ENCODE measurements at regions of chr6 and their contacts with region 1.

Region 1: GRCh38 chr6:36765594-36766398 is 68.2 kb downstream of the RAB44 start:
- DNase-seq: peak; percentile 76
- ATAC-seq: peak; percentile 95
- H3K4me3 ChIP-seq: no peak overlapping the region
- H3K27ac ChIP-seq: no peak overlapping the region
- H3K4me1 ChIP-seq: peaks cover 11% of the 10 kb centered on the region
- H3K27me3 ChIP-seq: peaks cover 13% of the 10 kb centered on the region
- CTCF ChIP-seq: peak; percentile 98
- POLR2A ChIP-seq: 0 out of 2 replicates have a peak, but pooled peaks have one; percentile 32
- RAD21 ChIP-seq: peak; percentile 98

Region 2: DNA sequence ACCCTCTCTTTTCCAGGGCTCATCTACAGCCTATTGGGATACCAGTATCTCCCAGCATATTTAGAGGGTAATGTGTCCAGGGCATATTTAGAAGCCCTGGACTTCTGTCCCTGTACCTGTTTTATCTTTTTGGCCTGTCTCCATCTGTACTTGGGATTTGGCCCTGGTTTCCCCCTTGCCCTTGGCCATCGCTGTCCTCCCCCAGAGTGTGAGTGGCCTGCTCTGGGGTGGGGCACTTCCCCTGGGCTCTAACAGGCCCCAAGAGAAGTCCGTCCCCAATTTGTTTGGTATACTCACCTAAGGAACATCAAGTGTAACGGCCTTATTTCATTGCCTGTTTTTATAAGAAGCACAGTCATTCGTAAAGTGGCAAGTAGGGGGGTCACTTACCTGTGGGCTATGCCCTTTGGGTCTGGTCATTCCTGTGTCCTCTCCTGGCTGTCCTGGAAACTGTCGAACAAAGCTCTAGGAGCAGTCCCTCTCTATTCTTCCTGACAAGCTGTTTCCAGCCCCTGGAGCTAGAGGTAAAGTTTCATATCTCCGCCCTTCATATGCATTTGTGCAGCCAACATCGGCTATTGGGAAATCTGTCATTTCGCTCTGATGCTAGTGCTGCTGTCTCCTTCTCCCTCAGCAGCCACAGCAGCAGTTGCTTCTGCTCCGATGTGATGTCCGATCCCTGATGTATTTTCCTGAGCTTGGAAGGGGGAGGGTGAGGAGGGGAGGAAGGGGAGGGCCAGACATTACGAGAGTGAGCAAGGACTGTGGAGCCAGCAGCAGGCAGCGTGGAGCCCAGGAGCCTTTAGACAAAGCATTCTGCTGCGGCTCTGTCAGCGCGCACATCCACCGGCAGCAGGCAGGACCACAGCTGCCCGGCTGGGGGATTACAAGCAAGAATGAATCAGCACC is 1708.1 kb before region 1 on chr6:
- CTCF ChIA-PET with region 1: no interaction called
- POLR2A ChIA-PET with region 1: no interaction called
- dilution Hi-C with region 1: no loop called
- in situ Hi-C with region 1: no loop called
- intact Hi-C with region 1: no loop called
- DNase-seq: no peak
- ATAC-seq: no peak
- H3K4me3 ChIP-seq: no peak overlapping the region
- H3K27ac ChIP-seq: no peak overlapping the region
- H3K4me1 ChIP-seq: peaks cover 9% of the 10 kb centered on the region
- H3K27me3 ChIP-seq: no peaks in the 10 kb centered on the region
- CTCF ChIP-seq: no peak
- POLR2A ChIP-seq: no peak
- RAD21 ChIP-seq: no peak

Region 3: GRCh38 chr6:36853325-36853724 is 87.5 kb after region 1 on chr6:
- CTCF ChIA-PET with region 1: interaction called, 5 read pairs
- POLR2A ChIA-PET with region 1: no interaction called
- dilution Hi-C with region 1: no loop called
- in situ Hi-C with region 1: no loop called
- intact Hi-C with region 1: loop called (anchors 2 kb)
- DNase-seq: peak; percentile 90
- ATAC-seq: peak; percentile 63
- H3K4me3 ChIP-seq: no peak overlapping the region
- H3K27ac ChIP-seq: peak overlapping the region; percentile 53
- H3K4me1 ChIP-seq: peaks cover 9% of the 10 kb centered on the region
- H3K27me3 ChIP-seq: no peaks in the 10 kb centered on the region
- CTCF ChIP-seq: no peak
- POLR2A ChIP-seq: no peak
- RAD21 ChIP-seq: no peak

Region 4: GRCh38 chr6:36885461-36886401 is 119.9 kb after region 1 on chr6 and contains the start of gene C6orf89:
- CTCF ChIA-PET with region 1: interaction called, 5 read pairs
- POLR2A ChIA-PET with region 1: no interaction called
- dilution Hi-C with region 1: no loop called
- in situ Hi-C with region 1: no loop called
- intact Hi-C with region 1: loop called (anchors 1 kb)
- DNase-seq: peak; percentile 96
- ATAC-seq: peak; percentile 100
- H3K4me3 ChIP-seq: peak within 1 kb of the TSS; percentile 80
- H3K27ac ChIP-seq: peak within 1 kb of the TSS; percentile 74
- H3K4me1 ChIP-seq: no peaks in the 10 kb centered on the region; the same call in 1 of the 2 replicates
- H3K27me3 ChIP-seq: no peaks in the 10 kb centered on the region
- CTCF ChIP-seq: peak; percentile 88
- POLR2A ChIP-seq: peak; percentile 56; the same call in 1 of the 2 replicates
- RAD21 ChIP-seq: peak; percentile 62
- total RNA-seq, gene C6orf89: 39.2 and 52.3 TPM in 2 replicates

Region 5: DNA sequence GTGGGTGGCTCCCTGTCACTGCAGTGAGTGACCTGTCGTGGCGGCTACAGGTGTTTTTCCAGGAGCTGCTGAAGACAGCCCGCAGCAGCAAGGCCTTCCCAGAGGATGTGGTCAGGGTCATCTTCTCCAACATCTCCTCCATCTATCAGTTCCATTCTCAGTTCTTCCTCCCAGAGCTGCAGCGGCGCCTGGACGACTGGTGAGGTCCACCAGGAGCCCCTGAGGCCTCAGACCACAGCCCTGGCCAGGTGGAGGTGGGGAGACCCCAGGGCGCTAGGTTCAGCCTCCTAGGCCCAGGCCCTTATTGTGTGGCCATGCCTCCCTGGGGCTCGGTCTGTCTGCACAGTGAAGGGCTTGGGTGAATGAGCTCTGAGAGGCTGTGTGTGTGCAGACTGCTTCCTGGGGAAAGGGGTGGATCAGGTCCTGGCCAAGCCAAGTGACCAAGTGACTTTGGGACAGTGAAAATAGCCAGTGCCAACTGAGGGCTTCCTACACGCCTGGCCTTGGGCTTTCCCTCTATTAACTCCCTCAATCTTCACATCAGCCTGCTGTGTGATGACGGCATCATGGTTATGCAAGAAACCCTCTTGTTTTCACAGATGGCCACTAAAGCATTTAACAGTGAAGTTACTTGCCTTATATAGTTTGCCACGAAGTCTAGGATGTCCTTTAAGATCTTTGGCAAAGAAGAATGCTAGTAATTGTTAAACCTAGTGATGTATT is 246.0 kb after region 1 on chr6:
- CTCF ChIA-PET with region 1: interaction called, 28 read pairs
- POLR2A ChIA-PET with region 1: no interaction called
- dilution Hi-C with region 1: no loop called
- in situ Hi-C with region 1: loop called (anchors 5 kb)
- intact Hi-C with region 1: no loop called
- DNase-seq: peak; percentile 79
- ATAC-seq: peak; percentile 66; the same call in 1 of the 2 replicates
- H3K4me3 ChIP-seq: no peak overlapping the region
- H3K27ac ChIP-seq: no peak overlapping the region
- H3K4me1 ChIP-seq: peaks cover 2% of the 10 kb centered on the region; the same call in 1 of the 2 replicates
- H3K27me3 ChIP-seq: 0 out of 2 replicates have a peak, but pooled peaks cover 2% of the 10 kb centered on the region
- CTCF ChIP-seq: no peak
- POLR2A ChIP-seq: no peak
- RAD21 ChIP-seq: no peak

Region 6: GRCh38 chr6:37207903-37208456 is 442.2 kb after region 1 on chr6:
- CTCF ChIA-PET with region 1: interaction called, 4 read pairs
- POLR2A ChIA-PET with region 1: no interaction called
- dilution Hi-C with region 1: no loop called
- in situ Hi-C with region 1: loop called (anchors 5 kb)
- intact Hi-C with region 1: loop called (anchors 5 kb)
- DNase-seq: peak; percentile 70
- ATAC-seq: peak; percentile 86
- H3K4me3 ChIP-seq: no peak overlapping the region
- H3K27ac ChIP-seq: no peak overlapping the region
- H3K4me1 ChIP-seq: peaks cover 2% of the 10 kb centered on the region; the same call in 1 of the 2 replicates
- H3K27me3 ChIP-seq: no peaks in the 10 kb centered on the region
- CTCF ChIP-seq: peak; percentile 69
- POLR2A ChIP-seq: no peak
- RAD21 ChIP-seq: peak; percentile 67

Region 7: DNA sequence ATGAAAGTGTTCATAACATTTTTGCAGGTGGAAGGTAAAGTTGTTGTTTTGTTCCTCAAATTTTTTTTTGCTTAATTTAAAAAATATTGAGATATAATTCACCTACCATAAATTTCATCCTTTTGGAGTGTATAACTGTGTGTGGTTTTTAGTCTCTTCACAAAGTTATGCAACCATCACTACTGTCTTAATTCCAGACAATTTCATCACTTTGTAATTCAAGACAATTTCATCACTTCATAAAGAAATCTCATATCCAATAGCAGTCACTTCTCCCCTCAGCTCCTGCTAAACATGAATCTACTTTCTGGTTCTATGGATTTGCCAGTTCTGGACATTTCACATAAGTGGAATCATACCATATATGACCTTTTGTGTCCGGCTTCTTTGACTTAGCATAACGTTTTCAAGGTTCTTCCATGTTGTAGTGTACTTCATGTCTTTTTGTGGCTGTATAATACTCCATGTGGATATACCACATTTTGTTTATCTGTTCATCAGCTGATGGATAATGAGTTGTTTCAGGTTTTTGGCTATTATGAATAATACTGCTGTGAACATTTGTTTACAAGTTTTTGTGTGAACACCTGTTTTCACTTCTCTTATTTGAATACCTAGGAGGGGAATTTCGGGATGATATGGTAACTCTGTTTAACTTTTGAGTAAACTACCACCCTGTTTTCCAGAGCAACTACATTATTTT is 1072.6 kb after region 1 on chr6:
- CTCF ChIA-PET with region 1: no interaction called
- POLR2A ChIA-PET with region 1: no interaction called
- dilution Hi-C with region 1: no loop called
- in situ Hi-C with region 1: no loop called
- intact Hi-C with region 1: no loop called
- DNase-seq: peak; percentile 56
- ATAC-seq: peak; percentile 40
- H3K4me3 ChIP-seq: no peak overlapping the region
- H3K27ac ChIP-seq: no peak overlapping the region
- H3K4me1 ChIP-seq: no peaks in the 10 kb centered on the region
- H3K27me3 ChIP-seq: no peaks in the 10 kb centered on the region
- CTCF ChIP-seq: no peak
- POLR2A ChIP-seq: no peak
- RAD21 ChIP-seq: no peak

Measured in IMR-90 (cell line).